AG04449 (cell line): ENCODE measurements at regions of chr16 and their contacts with region 1.

Region 1: DNA sequence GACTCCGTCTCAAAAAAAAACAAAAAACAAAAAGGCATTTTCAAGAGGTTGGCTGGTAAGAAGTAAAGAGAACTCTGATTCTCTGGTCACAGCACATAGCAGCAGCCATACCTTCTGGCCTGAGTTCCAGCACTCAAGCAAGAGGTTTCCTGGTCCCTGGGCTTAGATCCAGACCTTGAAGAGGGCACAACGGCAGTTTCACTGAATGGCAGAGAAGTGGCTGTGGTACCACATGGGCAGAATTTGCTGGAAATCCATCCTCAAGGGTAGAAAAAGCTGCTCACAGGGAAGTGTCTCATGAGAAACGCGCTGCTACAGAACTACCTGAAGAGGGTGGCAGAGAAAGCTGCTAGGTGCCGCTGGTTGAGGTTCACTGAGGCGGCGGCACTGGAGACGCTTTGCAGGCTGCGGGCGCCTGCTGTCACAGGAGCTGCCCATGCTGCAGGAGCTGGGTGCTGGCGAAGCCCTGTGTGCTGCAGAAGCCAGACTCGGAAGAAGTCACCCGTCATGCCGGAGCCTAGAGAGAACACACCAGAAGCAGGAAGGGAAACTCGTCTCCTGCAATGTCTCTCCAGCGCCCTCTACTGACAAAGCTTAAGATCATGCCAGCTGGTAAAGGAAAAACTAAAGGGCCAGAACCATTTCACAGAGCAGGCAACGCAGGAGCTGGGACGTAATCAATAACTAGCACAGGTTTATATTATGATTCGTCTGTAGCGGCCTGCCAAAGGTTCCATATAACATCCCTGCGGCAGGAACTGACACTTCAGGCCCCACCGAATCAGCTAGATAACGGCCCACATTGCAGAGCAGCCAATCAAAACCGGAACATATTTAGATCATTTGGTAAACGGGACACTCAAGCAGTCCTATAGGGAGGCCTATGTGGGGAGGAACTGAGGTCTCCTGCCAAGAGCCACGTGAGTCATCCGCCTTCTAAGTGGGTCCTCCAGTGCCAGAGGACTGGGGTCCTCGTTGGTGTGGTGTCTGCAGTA is 5.4 kb upstream of the ZNF213 start:
- DNase-seq: no peak
- H3K4me3 ChIP-seq: peak overlapping the region; percentile 48
- CTCF ChIP-seq: peak; percentile 86

Region 2: DNA sequence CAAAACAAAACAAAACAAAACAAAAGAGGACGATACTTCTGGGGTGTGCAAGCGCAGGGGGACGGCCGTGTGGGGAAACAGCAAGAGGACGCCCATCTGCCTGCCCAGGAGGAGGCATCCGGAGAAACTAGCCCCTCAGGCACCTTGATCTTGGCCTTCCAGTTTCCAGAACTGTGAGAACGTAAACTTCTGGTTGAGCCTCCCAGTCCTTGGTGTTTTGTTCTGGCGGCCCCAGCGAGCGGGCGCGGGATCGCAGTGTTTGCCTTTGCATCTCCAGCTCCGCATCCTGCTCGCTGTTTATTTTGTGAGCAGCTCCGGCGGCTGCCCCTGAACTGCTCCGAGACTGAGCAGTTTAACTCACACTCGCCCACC is 84.1 kb before region 1 on chr16:
- CTCF ChIA-PET with region 1: interaction called, 13 read pairs
- POLR2A ChIA-PET with region 1: no interaction called
- DNase-seq: no peak
- H3K4me3 ChIP-seq: peak overlapping the region; percentile 43
- CTCF ChIP-seq: no peak

Region 3: DNA sequence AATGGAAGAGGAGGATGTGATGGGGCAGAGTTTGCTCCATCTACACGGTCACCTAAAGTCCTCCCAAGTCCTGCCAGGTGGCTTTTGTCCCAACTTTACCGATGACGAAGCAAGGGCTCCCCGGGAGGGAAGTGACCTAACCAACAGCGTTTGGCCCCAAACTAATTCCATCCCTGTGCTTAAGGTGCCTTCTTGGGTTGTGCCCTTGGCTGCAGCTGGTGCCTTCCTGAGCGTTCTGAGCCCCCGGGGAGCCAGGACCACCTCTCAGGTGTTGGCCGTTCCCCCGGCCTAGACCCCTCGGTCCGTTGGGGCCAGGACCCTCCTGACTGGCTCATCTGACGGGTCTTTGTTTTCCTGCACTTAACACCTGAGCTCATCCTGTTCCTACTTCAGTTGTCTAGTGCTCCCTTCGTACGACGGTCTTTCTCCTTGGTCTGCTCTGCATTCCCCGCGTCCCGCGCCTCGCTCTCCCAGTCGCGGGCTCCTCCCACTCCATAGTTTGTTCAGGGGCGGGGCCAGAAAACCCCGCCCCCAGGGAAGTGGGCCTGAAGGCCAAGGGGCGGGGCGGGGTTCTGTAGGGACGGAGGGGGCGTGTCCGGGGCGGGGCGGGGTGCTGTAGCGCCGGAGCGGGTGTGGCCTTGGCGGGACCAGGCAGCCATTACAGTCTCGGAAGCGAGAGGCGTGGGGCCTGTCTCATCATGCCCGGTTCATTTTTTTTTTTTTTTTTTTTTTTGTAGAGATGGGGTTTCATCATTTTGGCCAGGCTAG is 29.5 kb before region 1 on chr16:
- CTCF ChIA-PET with region 1: interaction called, 31 read pairs
- POLR2A ChIA-PET with region 1: no interaction called
- DNase-seq: peak; percentile 9
- H3K4me3 ChIP-seq: peak overlapping the region; percentile 33
- CTCF ChIP-seq: no peak

Region 4: GRCh38 chr16:3112058-3112880 is 17.2 kb before region 1 on chr16 and contains the start of gene ZNF205:
- CTCF ChIA-PET with region 1: interaction called, 68 read pairs
- POLR2A ChIA-PET with region 1: interaction called, 6 read pairs
- DNase-seq: no peak
- H3K4me3 ChIP-seq: peak within 1 kb of the TSS; percentile 95
- CTCF ChIP-seq: no peak

Region 5: DNA sequence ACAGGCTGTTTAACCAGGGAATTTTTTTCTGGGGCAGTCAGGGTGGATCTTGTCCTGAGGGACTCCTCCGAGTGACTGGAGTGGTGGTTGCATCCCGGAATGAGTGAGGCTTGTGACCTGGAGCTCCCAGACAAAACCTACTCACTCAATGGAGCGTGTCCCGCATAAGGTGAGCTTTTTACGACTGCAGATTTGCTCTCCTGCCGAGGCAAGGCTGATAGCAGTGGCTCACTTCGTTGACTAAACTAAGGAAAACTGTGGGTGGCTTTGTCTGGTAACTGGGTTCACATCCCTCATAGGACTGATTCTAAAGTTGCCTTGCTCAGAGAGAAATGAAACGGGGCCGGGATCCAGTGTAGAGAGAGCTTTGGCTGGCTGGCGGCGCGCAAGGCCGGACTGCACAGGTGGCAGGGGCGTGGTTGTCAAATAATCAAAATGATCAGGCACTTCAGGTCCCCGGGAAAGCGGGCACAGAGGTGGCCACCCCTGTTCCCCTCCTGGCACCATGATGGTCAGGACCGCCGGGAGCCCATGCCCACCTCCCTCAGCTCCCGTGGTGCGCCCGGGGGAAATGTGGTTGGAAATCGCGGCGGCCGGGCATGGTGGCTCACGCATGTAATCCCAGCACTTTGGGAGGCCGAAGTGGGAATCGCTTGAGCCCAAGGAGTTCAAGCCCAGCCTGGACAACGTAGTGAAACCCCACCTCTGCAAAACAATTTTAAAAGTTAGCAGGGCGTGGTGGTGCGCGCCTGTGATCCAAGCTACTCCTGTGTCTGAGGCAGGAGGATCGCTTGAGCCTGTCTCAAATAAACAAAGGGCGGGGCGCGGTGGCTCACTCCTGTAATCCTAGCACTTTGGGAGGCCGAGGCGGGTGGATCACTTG is 31.9 kb after region 1 on chr16:
- CTCF ChIA-PET with region 1: interaction called, 15 read pairs
- POLR2A ChIA-PET with region 1: no interaction called
- DNase-seq: no peak
- H3K4me3 ChIP-seq: no peak overlapping the region
- CTCF ChIP-seq: no peak

Region 6: GRCh38 chr16:3274490-3274889 is 145.1 kb after region 1 on chr16:
- CTCF ChIA-PET with region 1: no interaction called
- POLR2A ChIA-PET with region 1: no interaction called
- DNase-seq: no peak
- H3K4me3 ChIP-seq: no peak overlapping the region
- CTCF ChIP-seq: no peak